ENCODE measurements at regions of chr6 and their contacts with region 1.

Region 1: GRCh38 chr6:28586962-28587745 is 61.5 kb downstream of the GPX5 start:
- DNase-seq: peak; percentile 80
- H3K4me3 ChIP-seq: peak overlapping the region; percentile 66 to 90
- H3K27ac ChIP-seq: peak overlapping the region in 1 of 2 experiments; percentile 89; a peak in 3 of 4 replicates
- H3K4me1 ChIP-seq: peaks cover 11 to 14% of the 10 kb centered on the region in 2 experiments; a peak in 3 of 4 replicates
- H3K27me3 ChIP-seq: no peaks in the 10 kb centered on the region
- CTCF ChIP-seq: no peak
- EP300 ChIP-seq: no peak
- RAD21 ChIP-seq: no peak

Region 2: GRCh38 chr6:28606424-28607400 is 19.6 kb after region 1 on chr6:
- CTCF ChIA-PET with region 1: interaction called, 13 read pairs
- POLR2A ChIA-PET with region 1: interaction called, 6 read pairs
- DNase-seq: peak; percentile 90
- H3K4me3 ChIP-seq: peak overlapping the region; percentile 46 to 59
- H3K27ac ChIP-seq: peak overlapping the region in 1 of 2 experiments; percentile 98; a peak in 2 of 4 replicates
- H3K4me1 ChIP-seq: no peaks in the 10 kb centered on the region; a peak in 2 of 4 replicates
- H3K27me3 ChIP-seq: no peaks in the 10 kb centered on the region
- CTCF ChIP-seq: peak; percentile 56
- EP300 ChIP-seq: peak in 1 of 2 experiments; percentile 13; a peak in 1 of 4 replicates
- RAD21 ChIP-seq: peak; percentile 32

Region 3: DNA sequence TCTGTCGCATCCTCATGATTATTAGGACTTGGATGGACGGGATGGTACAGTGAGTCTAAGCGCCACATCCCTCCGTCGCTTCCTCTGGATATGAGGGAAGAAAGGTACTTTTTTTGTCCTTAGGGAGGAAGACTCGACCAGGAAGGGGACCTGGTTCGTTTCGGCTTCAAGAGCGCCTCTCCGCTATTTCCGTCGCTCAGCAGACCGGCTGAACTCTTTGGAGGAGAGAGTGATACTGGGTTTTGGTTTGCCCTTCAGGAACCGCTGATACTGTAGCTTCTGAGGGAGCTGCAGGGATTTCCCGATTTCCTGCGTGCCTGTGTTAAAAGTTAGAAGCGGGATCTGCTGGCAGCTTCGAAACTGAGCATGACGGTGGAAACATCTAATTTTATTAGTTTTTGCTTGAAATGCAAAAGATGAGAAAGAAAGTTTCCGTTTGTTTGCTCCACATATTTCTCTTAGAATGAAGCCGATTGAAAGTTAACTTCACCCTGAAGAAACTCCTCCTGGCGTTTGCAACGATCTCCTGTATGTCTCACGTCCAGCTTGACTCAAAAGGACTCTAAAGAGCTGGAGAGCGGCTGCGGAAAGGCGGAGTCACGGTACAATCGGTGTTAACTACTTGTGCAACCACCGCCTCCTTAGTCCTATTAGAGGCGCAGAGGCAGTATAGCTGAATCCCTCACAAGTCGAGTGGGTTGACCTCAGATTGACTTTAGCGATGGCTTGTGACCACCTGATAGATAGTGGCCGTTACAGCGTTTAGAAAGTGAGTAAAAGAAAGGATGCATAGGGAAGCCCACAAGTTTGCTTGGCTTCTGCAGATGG is 207.2 kb after region 1 on chr6:
- CTCF ChIA-PET with region 1: no interaction called
- POLR2A ChIA-PET with region 1: no interaction called
- DNase-seq: no peak
- H3K4me3 ChIP-seq: peak overlapping the region; percentile 35 to 54
- H3K27ac ChIP-seq: no peak overlapping the region
- H3K4me1 ChIP-seq: peaks cover 0 to 4% of the 10 kb centered on the region in 2 experiments; a peak in 1 of 4 replicates
- H3K27me3 ChIP-seq: peaks cover 26% of the 10 kb centered on the region; the same call in 1 of the 2 replicates
- CTCF ChIP-seq: no peak
- EP300 ChIP-seq: no peak
- RAD21 ChIP-seq: no peak

Measured in SK-N-SH (cell line).